Activated T-helper 2 cell treated with anti-CD3 and anti-CD28 coated beads, Interferon-gamma antibody, Interleukin-2, Interleukin-4, amounts not matched to agents 10 μg/mL and 5 μg/mL and 100 μg/mL, durations not matched to agents 14 hours and 24 hours and 36 hours (primary cell): ENCODE measurements at regions of chr16 and their contacts with region 1.

Region 1: DNA sequence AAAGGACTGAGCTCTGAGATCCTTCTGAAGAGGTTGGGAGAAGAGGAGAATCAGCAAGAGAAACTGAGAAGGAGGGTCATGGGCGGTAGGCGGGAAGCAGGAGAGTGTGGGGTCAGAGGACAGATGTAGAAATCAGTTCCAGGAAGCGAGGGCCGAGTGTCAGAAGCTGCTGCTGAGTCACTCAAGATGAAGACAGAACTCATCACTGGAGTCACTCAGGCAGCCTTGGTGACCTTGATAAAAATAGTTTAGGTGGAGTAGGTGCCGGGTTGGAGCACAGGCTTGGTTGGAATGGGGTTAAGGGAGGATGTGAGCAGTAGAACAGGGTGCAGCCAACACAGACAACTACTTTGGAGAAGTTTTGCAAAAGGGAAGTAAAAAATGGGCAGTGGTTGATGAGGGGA is 6.1 kb upstream of the ITGAM start:
- DNase-seq: peak; percentile 34
- H3K4me3 Mint-ChIP-seq: peak overlapping the region; percentile 72
- H3K27ac Mint-ChIP-seq: peak overlapping the region; percentile 93
- H3K4me1 Mint-ChIP-seq: peaks cover 42% of the 10 kb centered on the region
- H3K27me3 Mint-ChIP-seq: no peaks in the 10 kb centered on the region

Region 2: GRCh38 chr16:31354394-31355291 is 101.0 kb after region 1 on chr16 and contains the start of gene ITGAX:
- intact Hi-C with region 1: loop called (anchors 5 kb)
- DNase-seq: peak; percentile 64
- H3K4me3 Mint-ChIP-seq: peak within 1 kb of the TSS; percentile 86
- H3K27ac Mint-ChIP-seq: peak within 1 kb of the TSS; percentile 97
- H3K4me1 Mint-ChIP-seq: peaks cover 62% of the 10 kb centered on the region
- H3K27me3 Mint-ChIP-seq: no peaks in the 10 kb centered on the region
- total RNA-seq, gene ITGAX: 56.2 and 56.9 TPM in 2 replicates